CD4-positive, alpha-beta T cell (primary cell): ENCODE measurements at regions of chr19 and their contacts with region 1.

Region 1: GRCh38 chr19:4400135-4400936 is at the start of gene SH3GL1:
- DNase-seq: peak; percentile 82 to 98 (median 92)
- ATAC-seq: peak; percentile 61
- H3K4me3 ChIP-seq: peak within 1 kb of the TSS; percentile 98
- H3K4me3 Mint-ChIP-seq: peak within 1 kb of the TSS; percentile 96
- H3K27ac ChIP-seq: peak within 1 kb of the TSS; percentile 91 to 93
- H3K27ac Mint-ChIP-seq: peak within 1 kb of the TSS; percentile 95
- H3K4me1 ChIP-seq: peaks cover 57% of the 10 kb centered on the region
- H3K4me1 Mint-ChIP-seq: peaks cover 69% of the 10 kb centered on the region
- H3K27me3 ChIP-seq: no peaks in the 10 kb centered on the region
- H3K27me3 Mint-ChIP-seq: no peaks in the 10 kb centered on the region
- CTCF ChIP-seq: peak; percentile 88
- total RNA-seq, gene SH3GL1: 39.3 to 40.9 TPM

Region 2: DNA sequence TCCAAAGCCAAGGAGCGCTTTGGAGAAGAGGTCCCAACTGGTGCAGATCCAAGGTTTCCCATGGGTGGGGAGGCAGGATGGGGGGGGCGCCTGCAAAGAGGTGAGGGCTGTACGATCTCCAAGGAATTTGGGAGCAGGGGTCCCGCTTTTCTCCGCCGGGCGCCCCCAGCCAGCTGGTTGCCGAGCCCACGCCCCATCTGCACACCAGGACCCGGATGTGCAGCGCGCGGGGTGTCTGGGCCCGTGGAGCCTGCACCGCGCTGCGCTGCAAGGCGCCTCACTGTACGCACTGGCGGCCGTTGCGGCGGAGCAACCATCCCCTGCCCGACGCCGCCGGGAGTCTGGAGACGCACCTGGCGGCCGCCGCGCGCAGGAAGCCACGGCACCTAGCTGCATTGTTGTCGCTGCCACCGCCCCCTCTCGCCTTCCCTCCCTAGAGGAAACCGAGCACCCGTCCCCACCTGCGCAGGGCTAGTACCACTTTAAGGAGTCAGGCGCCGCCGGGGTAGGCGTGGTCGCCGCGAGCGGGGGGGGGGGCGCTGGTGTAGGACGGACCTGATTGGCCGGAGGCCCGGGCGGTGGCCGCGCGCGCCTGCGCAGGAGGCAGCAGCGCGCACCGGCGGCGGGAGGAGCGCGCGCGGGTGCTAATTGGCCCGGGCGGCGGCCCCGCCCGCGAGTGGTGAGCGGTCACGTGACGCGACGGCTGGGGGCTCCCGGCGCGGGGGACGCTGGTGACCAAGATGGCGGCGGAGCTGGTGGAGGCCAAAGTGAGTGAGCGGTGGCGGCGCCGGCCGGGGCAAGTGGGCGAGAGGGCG is 393.1 kb before region 1 on chr19 and contains the start of gene PIAS4:
- CTCF ChIA-PET with region 1: interaction called, 3 read pairs
- POLR2A ChIA-PET with region 1: no interaction called
- intact Hi-C with region 1: loop called in 1 of 2 experiments (anchors 5 kb)
- DNase-seq: peak; percentile 93 to 99 (median 96)
- ATAC-seq: peak; percentile 87
- H3K4me3 ChIP-seq: peak within 1 kb of the TSS; percentile 85
- H3K4me3 Mint-ChIP-seq: peak within 1 kb of the TSS; percentile 89
- H3K27ac ChIP-seq: peak within 1 kb of the TSS in 1 of 2 donors; percentile 60
- H3K27ac Mint-ChIP-seq: peak within 1 kb of the TSS; percentile 80
- H3K4me1 ChIP-seq: peaks cover 48% of the 10 kb centered on the region
- H3K4me1 Mint-ChIP-seq: peaks cover 15% of the 10 kb centered on the region
- H3K27me3 ChIP-seq: no peaks in the 10 kb centered on the region
- H3K27me3 Mint-ChIP-seq: no peaks in the 10 kb centered on the region
- CTCF ChIP-seq: peak; percentile 24
- total RNA-seq, gene PIAS4: 14.5 to 16.5 TPM

Region 3: DNA sequence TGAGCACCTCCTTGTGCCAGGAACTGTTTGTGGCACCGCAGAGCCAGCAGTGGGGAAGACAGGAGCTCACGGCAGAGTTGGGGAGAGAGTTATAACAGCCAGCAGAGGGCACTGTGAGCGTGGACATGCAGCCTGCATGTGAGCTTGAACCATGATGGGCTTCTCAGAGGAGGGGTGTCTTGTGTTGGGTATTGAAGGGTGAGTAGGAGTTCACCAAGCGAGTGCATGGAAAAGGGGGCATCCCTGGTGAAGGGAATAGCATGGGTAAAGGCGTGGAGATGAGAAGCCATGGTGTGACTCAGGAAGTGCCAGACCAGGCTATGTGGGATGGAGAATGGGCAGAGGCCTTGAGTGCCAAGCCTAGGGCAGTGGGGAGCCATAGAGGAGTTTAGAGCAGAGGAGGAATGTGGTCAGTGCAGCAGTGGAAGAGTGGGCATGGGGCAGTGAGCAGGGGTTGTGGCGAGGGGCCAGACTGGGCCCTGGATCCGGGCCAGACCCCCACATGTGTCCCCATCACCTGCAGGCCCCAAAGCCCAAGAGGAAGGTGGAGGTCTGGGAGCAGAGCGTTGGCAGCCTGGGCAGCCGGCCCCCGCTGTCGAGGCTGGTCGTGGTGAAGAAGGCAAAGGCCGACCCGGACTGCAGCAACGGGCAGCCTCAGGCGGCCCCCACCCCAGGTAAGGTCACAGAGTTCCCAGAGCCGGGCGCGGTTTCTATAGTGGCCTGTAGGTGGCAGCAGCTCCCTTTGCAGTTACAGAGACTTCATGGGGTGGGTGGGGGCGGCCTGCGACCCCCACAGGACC is 133.0 kb before region 1 on chr19:
- CTCF ChIA-PET with region 1: interaction called, 7 read pairs
- POLR2A ChIA-PET with region 1: interaction called, 3 read pairs
- intact Hi-C with region 1: loop called (anchors 1 to 5 kb)
- DNase-seq: peak; percentile 44 to 75 (median 56)
- ATAC-seq: peak; percentile 70
- H3K4me3 ChIP-seq: no peak overlapping the region
- H3K4me3 Mint-ChIP-seq: no peak overlapping the region
- H3K27ac ChIP-seq: no peak overlapping the region
- H3K27ac Mint-ChIP-seq: no peak overlapping the region
- H3K4me1 ChIP-seq: peaks cover 20% of the 10 kb centered on the region
- H3K4me1 Mint-ChIP-seq: peaks cover 18% of the 10 kb centered on the region
- H3K27me3 ChIP-seq: no peaks in the 10 kb centered on the region
- H3K27me3 Mint-ChIP-seq: no peaks in the 10 kb centered on the region
- CTCF ChIP-seq: peak; percentile 79

Region 4: GRCh38 chr19:4369888-4370260 is 30.5 kb before region 1 on chr19:
- CTCF ChIA-PET with region 1: interaction called, 63 read pairs
- POLR2A ChIA-PET with region 1: interaction called, 33 read pairs
- intact Hi-C with region 1: loop called (anchors 1 kb)
- DNase-seq: peak; percentile 58 to 89 (median 70)
- ATAC-seq: peak; percentile 74
- H3K4me3 ChIP-seq: peak overlapping the region; percentile 59
- H3K4me3 Mint-ChIP-seq: peak overlapping the region; percentile 90
- H3K27ac ChIP-seq: peak overlapping the region; percentile 78 to 87
- H3K27ac Mint-ChIP-seq: peak overlapping the region; percentile 90
- H3K4me1 ChIP-seq: peaks cover 75% of the 10 kb centered on the region
- H3K4me1 Mint-ChIP-seq: peaks cover 30% of the 10 kb centered on the region
- H3K27me3 ChIP-seq: no peaks in the 10 kb centered on the region
- H3K27me3 Mint-ChIP-seq: no peaks in the 10 kb centered on the region
- CTCF ChIP-seq: peak; percentile 65

Region 5: GRCh38 chr19:4457654-4458395 is 57.5 kb after region 1 on chr19 and contains the start of gene UBXN6:
- CTCF ChIA-PET with region 1: interaction called, 4 read pairs
- POLR2A ChIA-PET with region 1: no interaction called
- intact Hi-C with region 1: loop called (anchors 1 to 5 kb)
- DNase-seq: peak; percentile 96 to 100 (median 98)
- ATAC-seq: peak; percentile 95
- H3K4me3 ChIP-seq: peak within 1 kb of the TSS; percentile 70
- H3K4me3 Mint-ChIP-seq: peak within 1 kb of the TSS; percentile 94
- H3K27ac ChIP-seq: peak within 1 kb of the TSS; percentile 49 to 68
- H3K27ac Mint-ChIP-seq: peak within 1 kb of the TSS; percentile 89
- H3K4me1 ChIP-seq: peaks cover 25% of the 10 kb centered on the region
- H3K4me1 Mint-ChIP-seq: peaks cover 16% of the 10 kb centered on the region
- H3K27me3 ChIP-seq: no peaks in the 10 kb centered on the region
- H3K27me3 Mint-ChIP-seq: no peaks in the 10 kb centered on the region
- CTCF ChIP-seq: no peak
- total RNA-seq, gene UBXN6: 54.5 to 58.4 TPM

Region 6: DNA sequence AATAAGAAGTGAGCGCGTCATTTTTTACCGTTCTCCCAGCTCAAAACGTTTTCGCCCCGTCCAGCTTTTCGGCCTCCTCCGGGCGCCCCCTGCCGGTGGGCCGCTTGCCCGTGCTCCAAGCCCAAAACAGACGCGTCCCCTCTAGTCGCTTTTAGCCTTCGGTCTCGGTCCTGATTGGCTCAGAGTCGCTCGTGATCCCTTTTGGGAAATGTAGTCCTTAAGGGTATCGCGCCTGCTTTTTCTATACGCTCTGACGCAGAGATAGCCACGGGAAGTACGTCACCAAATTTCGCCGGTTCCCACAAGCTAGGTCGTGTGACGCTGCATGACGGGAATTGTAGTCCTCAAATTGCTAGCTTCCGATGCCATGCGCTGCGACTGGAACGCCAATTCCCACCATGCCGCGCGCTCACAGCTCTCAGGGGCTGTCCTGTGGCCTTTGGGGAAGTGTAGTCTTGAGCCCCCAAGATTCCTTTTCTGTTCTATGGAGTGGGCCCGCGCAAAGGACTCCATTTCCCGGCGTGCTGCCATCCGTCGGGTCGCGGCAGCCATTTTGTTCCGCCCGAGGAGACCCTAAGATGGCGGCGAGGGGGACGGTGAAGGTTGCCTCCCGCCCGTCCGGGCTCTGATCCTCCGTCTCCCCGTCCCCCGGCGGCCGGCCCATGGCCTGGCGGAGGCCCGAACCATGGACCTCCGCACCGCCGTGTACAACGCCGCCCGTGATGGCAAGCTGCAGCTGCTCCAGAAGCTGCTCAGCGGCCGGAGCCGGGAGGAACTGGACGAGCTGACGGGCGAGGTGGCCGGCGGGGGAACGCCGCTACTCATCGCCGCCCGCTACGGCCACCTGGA is 391.1 kb after region 1 on chr19 and contains the start of gene FEM1A:
- CTCF ChIA-PET with region 1: no interaction called
- POLR2A ChIA-PET with region 1: interaction called, 3 read pairs
- intact Hi-C with region 1: loop called in 1 of 2 experiments (anchors 10 kb)
- DNase-seq: peak; percentile 95 to 100 (median 97)
- ATAC-seq: peak; percentile 93
- H3K4me3 ChIP-seq: peak within 1 kb of the TSS; percentile 76
- H3K4me3 Mint-ChIP-seq: peak within 1 kb of the TSS; percentile 88
- H3K27ac ChIP-seq: peak within 1 kb of the TSS; percentile 83 to 87
- H3K27ac Mint-ChIP-seq: peak within 1 kb of the TSS; percentile 62
- H3K4me1 ChIP-seq: peaks cover 40% of the 10 kb centered on the region
- H3K4me1 Mint-ChIP-seq: peaks cover 26% of the 10 kb centered on the region
- H3K27me3 ChIP-seq: no peaks in the 10 kb centered on the region
- H3K27me3 Mint-ChIP-seq: no peaks in the 10 kb centered on the region
- CTCF ChIP-seq: peak; percentile 99
- total RNA-seq, gene FEM1A: 11.8 to 12.1 TPM

Region 7: DNA sequence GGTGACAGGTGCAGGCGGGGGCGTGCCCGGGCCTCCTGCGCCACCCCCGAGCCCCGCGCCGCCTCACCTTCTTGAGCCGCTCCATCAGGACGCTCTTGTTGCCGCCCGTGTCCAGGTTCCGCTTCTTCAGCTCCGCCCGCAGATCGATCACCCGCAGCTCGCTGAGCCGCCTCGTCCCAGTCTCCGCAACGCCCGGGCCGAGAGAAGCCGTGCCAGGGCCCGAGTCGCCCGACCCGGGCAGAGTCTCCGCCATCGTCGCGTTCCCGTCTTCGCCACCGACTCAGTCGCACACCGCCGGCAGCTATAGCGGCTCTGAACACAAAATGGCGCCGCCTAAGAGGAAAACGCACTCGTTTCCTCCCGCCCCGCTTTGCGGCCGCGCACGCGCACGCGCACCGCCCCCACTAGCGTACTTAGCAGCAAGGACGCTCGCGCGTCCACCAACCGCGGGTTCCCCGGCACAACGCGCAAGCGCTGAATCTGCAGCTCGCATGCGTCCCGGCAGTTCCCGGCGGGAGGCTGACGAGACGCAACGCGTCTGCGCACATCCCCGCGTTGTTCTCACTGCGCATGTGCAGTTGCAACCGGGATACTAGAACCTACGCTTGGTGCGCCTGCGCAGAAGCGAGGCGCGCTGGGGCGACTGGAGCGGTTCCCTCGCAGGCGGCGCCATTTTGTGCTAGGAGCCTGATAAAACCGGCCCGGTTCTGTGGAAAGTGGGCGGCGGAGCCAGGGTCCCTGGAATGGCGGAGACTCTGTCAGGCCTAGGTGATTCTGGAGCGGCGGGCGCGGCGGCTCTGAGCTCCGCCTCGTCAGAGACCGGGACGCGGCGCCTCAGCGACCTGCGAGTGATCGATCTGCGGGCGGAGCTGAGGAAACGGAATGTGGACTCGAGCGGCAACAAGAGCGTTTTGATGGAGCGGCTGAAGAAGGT is 1222.4 kb after region 1 on chr19 and contains the starts of genes SAFB and SAFB2:
- CTCF ChIA-PET with region 1: no interaction called
- POLR2A ChIA-PET with region 1: no interaction called
- intact Hi-C with region 1: loop called in 1 of 2 experiments (anchors 10 kb)
- DNase-seq: peak; percentile 98 to 100 (median 100)
- ATAC-seq: peak; percentile 79
- H3K4me3 ChIP-seq: peak within 1 kb of the TSS; percentile 85
- H3K4me3 Mint-ChIP-seq: peak within 1 kb of the TSS; percentile 99
- H3K27ac ChIP-seq: peak within 1 kb of the TSS; percentile 90 to 95
- H3K27ac Mint-ChIP-seq: peak within 1 kb of the TSS; percentile 98
- H3K4me1 ChIP-seq: peaks cover 79% of the 10 kb centered on the region
- H3K4me1 Mint-ChIP-seq: peaks cover 84% of the 10 kb centered on the region
- H3K27me3 ChIP-seq: no peaks in the 10 kb centered on the region
- H3K27me3 Mint-ChIP-seq: no peaks in the 10 kb centered on the region
- CTCF ChIP-seq: no peak
- total RNA-seq, gene SAFB: 195 to 200 TPM
- total RNA-seq, gene SAFB2: 238 to 246 TPM